OCI-LY7 (cell line): ENCODE measurements at regions of chr14 and their contacts with region 1.

Region 1: GRCh38 chr14:67704484-67705089 is 2.9 kb downstream of the RDH12 start:
- DNase-seq: peak; percentile 79
- H3K4me3 ChIP-seq: no peak overlapping the region
- H3K27ac ChIP-seq: no peak overlapping the region
- H3K4me1 ChIP-seq: no peaks in the 10 kb centered on the region
- CTCF ChIP-seq: peak; percentile 87

Region 2: DNA sequence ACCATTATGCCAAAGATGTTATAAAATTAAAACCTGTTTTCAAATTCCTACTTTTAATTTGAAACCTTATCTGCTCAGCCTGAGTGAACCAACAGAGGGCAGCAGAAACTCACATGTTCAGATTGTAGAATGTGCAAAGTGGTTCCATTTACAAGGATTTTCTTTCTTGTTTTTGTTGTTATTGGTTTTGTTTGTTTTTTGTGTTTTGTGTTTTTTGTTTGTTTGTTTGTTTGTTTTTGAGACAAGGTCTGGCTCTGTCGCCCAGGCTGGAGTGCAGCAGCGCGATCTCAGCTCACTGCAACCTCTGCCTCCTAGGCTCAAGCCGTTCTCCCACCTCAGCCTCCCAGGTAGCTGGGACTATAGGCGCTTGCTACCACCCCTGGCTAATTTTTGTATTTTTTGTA is 538.1 kb before region 1 on chr14:
- CTCF ChIA-PET with region 1: no interaction called
- POLR2A ChIA-PET with region 1: no interaction called
- intact Hi-C with region 1: loop called (anchors 10 kb)
- DNase-seq: peak; percentile 49
- H3K4me3 ChIP-seq: no peak overlapping the region
- H3K27ac ChIP-seq: no peak overlapping the region
- H3K4me1 ChIP-seq: no peaks in the 10 kb centered on the region
- CTCF ChIP-seq: peak; percentile 94

Region 3: DNA sequence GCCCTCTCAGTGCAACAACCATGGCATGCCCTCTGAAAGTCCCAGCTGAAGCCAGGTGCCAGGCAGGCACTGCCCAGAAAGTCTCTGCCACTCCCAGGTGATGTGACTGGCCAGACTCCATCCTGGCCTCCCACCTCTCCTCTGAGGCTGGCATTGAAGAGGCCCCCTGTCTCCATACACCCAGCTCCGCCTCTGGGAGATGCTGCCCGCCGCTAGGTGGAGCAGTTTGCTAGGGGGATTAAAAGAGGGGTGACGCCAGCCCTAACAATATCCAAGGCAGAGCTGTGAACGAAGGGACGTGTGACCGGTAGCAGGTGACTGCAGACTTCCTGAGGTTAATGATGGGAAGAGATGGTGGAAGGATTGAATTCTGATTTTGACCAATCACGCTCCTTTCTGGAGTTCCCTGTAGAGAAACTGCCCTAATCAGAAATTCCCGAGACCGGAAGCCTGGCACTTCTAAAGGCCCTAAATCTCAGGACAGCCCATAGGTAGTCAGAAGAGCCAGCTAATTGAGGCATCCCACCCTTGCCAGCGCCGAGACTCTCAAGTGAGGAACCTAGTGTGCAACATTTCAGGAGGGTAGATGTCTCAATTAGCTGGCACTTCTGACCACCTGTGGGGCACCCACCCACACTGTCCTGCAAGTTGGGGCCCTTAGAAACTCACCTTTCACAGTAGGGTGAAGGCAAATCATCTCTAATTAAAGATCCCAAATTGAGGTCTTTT is 284.3 kb before region 1 on chr14:
- CTCF ChIA-PET with region 1: interaction called, 4 read pairs
- POLR2A ChIA-PET with region 1: no interaction called
- intact Hi-C with region 1: loop called (anchors 1 kb)
- DNase-seq: peak; percentile 67
- H3K4me3 ChIP-seq: no peak overlapping the region
- H3K27ac ChIP-seq: no peak overlapping the region
- H3K4me1 ChIP-seq: peaks cover 3% of the 10 kb centered on the region
- CTCF ChIP-seq: peak; percentile 90

Region 4: DNA sequence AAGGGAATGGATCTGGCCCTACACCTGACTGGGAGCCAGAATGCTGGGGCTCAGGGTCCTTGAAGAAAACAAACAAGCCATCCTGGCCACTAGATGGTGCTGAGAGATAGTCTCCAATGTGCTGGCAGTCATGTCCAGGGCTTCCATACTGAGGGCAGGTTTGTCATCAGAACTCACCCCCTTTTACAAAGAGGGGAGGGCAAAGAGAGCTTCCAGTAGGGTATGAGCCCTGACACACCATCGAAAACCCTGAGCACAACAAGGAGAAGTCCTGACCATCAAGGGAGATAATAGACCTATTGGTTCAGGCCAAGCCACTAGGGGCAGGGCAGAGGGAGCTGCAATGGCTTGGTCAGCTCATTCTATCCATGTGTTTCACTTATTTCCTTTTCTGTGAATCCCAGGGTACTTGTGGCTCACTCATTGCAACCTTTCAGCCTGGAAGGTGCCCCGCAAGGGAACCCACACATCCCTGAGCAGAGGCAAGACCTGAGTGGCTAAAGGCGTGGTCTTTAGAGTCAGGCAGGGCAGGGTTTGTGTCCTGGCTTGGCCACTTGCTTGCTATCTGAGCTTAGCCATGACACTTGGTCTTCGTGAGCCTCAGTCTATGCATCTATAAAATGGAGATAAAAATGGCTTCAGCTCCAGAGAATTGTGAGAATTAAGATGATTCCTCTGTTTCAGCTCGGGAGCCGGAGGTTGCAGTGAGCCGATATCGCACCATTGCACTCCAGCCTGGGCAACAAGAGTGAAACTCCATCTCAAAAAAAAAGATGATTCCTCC is 177.7 kb before region 1 on chr14:
- CTCF ChIA-PET with region 1: interaction called, 3 read pairs
- POLR2A ChIA-PET with region 1: no interaction called
- intact Hi-C with region 1: loop called (anchors 10 kb)
- DNase-seq: peak; percentile 53
- H3K4me3 ChIP-seq: no peak overlapping the region
- H3K27ac ChIP-seq: no peak overlapping the region
- H3K4me1 ChIP-seq: no peaks in the 10 kb centered on the region
- CTCF ChIP-seq: peak; percentile 95

Region 5: DNA sequence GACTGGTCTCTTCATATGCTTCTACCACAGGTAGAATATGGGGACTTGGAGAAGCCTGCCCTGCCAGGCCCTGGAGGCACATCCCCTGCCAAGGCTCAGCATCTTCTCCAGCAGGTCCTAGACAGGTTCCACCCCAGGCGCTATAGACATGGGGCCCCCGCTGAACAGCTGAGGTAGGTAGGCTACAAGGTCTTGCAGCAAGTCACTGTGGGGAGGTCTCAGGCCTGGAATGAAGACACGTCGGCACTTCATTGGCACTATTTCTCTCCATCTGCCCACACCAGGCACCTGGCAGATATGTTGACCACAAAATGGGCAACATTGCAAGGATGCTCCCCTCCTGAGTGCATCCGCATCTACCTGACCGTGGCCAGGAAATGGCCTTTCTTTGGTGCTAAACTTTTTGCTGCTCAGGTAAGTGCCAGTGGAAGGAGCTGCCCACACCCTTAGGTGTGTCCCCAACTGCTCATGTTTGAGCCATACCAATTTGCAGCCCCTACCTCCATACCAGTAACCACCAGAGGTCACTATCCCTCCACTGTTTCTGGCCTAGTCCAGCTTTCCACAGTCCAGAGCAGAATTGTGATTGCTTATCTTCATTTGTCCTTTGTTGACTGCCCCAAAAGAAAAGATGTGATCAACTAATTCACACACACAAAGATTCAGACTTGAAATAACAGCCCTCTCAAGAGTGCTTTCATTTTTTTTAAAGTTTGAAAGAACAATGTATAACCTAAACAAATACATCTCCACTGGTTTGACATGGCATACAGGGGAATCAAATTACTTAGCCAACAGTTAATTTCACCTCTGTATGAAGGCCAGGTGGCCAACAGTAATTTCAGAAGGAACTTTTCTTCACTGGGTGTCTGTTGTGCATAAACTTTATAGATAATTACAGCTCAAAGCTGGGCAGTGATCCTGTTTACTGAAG is 120.6 kb before region 1 on chr14:
- CTCF ChIA-PET with region 1: interaction called, 14 read pairs
- POLR2A ChIA-PET with region 1: interaction called, 6 read pairs
- intact Hi-C with region 1: loop called (anchors 1 kb)
- DNase-seq: peak; percentile 64
- H3K4me3 ChIP-seq: no peak overlapping the region
- H3K27ac ChIP-seq: no peak overlapping the region
- H3K4me1 ChIP-seq: no peaks in the 10 kb centered on the region
- CTCF ChIP-seq: peak; percentile 85

Region 6: GRCh38 chr14:67619446-67620216 is 85.0 kb before region 1 on chr14 and contains the start of gene ARG2:
- CTCF ChIA-PET with region 1: interaction called, 4 read pairs
- POLR2A ChIA-PET with region 1: interaction called, 5 read pairs
- intact Hi-C with region 1: loop called (anchors 2 kb)
- DNase-seq: peak; percentile 85
- H3K4me3 ChIP-seq: peak within 1 kb of the TSS; percentile 70
- H3K27ac ChIP-seq: no peak within 1 kb of the TSS
- H3K4me1 ChIP-seq: peaks cover 25% of the 10 kb centered on the region
- CTCF ChIP-seq: no peak; the same call in 1 of the 2 replicates
- total RNA-seq, gene ARG2: 2.9 and 4.2 TPM in 2 replicates

Region 7: GRCh38 chr14:67738740-67739504 is 34.3 kb after region 1 on chr14:
- CTCF ChIA-PET with region 1: no interaction called
- POLR2A ChIA-PET with region 1: no interaction called
- intact Hi-C with region 1: no loop called
- DNase-seq: no peak
- H3K4me3 ChIP-seq: no peak overlapping the region
- H3K27ac ChIP-seq: no peak overlapping the region
- H3K4me1 ChIP-seq: no peaks in the 10 kb centered on the region
- CTCF ChIP-seq: no peak

Region 8: GRCh38 chr14:67749341-67750084 is 44.9 kb after region 1 on chr14:
- CTCF ChIA-PET with region 1: no interaction called
- POLR2A ChIA-PET with region 1: interaction called, 11 read pairs
- intact Hi-C with region 1: no loop called
- DNase-seq: no peak
- H3K4me3 ChIP-seq: no peak overlapping the region
- H3K27ac ChIP-seq: no peak overlapping the region
- H3K4me1 ChIP-seq: no peaks in the 10 kb centered on the region
- CTCF ChIP-seq: no peak

Region 9: GRCh38 chr14:67943947-67944346 is 239.4 kb after region 1 on chr14:
- CTCF ChIA-PET with region 1: no interaction called
- POLR2A ChIA-PET with region 1: no interaction called
- intact Hi-C with region 1: no loop called
- DNase-seq: peak; percentile 80
- H3K4me3 ChIP-seq: no peak overlapping the region
- H3K27ac ChIP-seq: no peak overlapping the region
- H3K4me1 ChIP-seq: no peaks in the 10 kb centered on the region
- CTCF ChIP-seq: peak; percentile 98